Mammary epithelial cell (primary cell): ENCODE measurements at regions of chr10 and their contacts with region 1.

Region 1: GRCh38 chr10:60032723-60033122 is 126.4 kb upstream of the CCDC6 start:
- DNase-seq: peak; percentile 59
- H3K4me3 ChIP-seq: no peak overlapping the region
- H3K27ac ChIP-seq: no peak overlapping the region
- H3K4me1 ChIP-seq: no peaks in the 10 kb centered on the region
- H3K27me3 ChIP-seq: no peaks in the 10 kb centered on the region
- CTCF ChIP-seq: peak; percentile 69 to 71

Region 2: DNA sequence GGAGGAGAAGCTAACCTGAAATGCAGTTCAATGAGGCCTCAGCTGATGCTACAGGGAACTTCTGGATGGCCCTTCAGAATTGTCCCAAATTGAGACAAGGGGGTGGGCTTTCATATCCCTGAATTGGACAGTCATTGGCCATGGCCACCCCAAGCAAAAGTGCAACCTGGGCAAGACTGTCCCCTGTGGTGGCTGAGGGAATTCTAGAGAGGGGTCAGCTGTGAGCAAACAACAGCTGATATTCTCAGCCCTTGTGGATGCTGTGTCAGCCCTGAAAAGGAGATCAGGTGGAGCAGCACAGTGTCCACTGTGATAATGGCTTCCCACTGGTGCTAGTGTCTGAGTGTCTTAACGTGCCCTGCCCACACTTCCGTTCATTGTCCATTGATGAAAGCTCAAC is 399.7 kb before region 1 on chr10:
- CTCF ChIA-PET with region 1: no interaction called
- dilution Hi-C with region 1: no loop called
- in situ Hi-C with region 1: loop called in 1 of 2 experiments (anchors 10 kb)
- intact Hi-C with region 1: no loop called
- DNase-seq: no peak
- H3K4me3 ChIP-seq: no peak overlapping the region
- H3K27ac ChIP-seq: no peak overlapping the region
- H3K4me1 ChIP-seq: no peaks in the 10 kb centered on the region
- H3K27me3 ChIP-seq: no peaks in the 10 kb centered on the region
- CTCF ChIP-seq: no peak

Region 3: GRCh38 chr10:59830601-59831259 is 202.0 kb before region 1 on chr10:
- CTCF ChIA-PET with region 1: no interaction called
- dilution Hi-C with region 1: no loop called
- in situ Hi-C with region 1: no loop called
- intact Hi-C with region 1: loop called (anchors 10 kb)
- DNase-seq: peak; percentile 12
- H3K4me3 ChIP-seq: no peak overlapping the region
- H3K27ac ChIP-seq: no peak overlapping the region
- H3K4me1 ChIP-seq: no peaks in the 10 kb centered on the region
- H3K27me3 ChIP-seq: no peaks in the 10 kb centered on the region
- CTCF ChIP-seq: peak; percentile 82 to 85

Region 4: GRCh38 chr10:59865101-59865500 is 167.6 kb before region 1 on chr10:
- CTCF ChIA-PET with region 1: no interaction called
- dilution Hi-C with region 1: no loop called
- in situ Hi-C with region 1: loop called (anchors 25 kb)
- intact Hi-C with region 1: loop called (anchors 1 kb)
- DNase-seq: peak; percentile 70
- H3K4me3 ChIP-seq: no peak overlapping the region
- H3K27ac ChIP-seq: peak overlapping the region; percentile 37
- H3K4me1 ChIP-seq: peaks cover 23% of the 10 kb centered on the region
- H3K27me3 ChIP-seq: no peaks in the 10 kb centered on the region
- CTCF ChIP-seq: peak; percentile 53 to 77

Region 5: GRCh38 chr10:60099998-60100747 is 67.5 kb after region 1 on chr10:
- CTCF ChIA-PET with region 1: no interaction called
- dilution Hi-C with region 1: no loop called
- in situ Hi-C with region 1: no loop called
- intact Hi-C with region 1: no loop called
- DNase-seq: peak; percentile 23
- H3K4me3 ChIP-seq: no peak overlapping the region
- H3K27ac ChIP-seq: no peak overlapping the region
- H3K4me1 ChIP-seq: no peaks in the 10 kb centered on the region
- H3K27me3 ChIP-seq: no peaks in the 10 kb centered on the region
- CTCF ChIP-seq: peak; percentile 43 to 59